ENCODE measurements at regions of chr7 and their contacts with region 1.

Region 1: GRCh38 chr7:43572516-43573049 is 10.3 kb upstream of the STK17A start:
- DNase-seq: no peak
- ATAC-seq: peak; percentile 65
- H3K4me3 ChIP-seq: no peak overlapping the region
- H3K27ac ChIP-seq: peak overlapping the region; percentile 18; the same call in 1 of the 2 replicates
- H3K4me1 ChIP-seq: peaks cover 33% of the 10 kb centered on the region
- H3K27me3 ChIP-seq: no peaks in the 10 kb centered on the region
- CTCF ChIP-seq: no peak
- EP300 ChIP-seq: no peak; a peak in 1 of 4 replicates
- POLR2A ChIP-seq: no peak
- RAD21 ChIP-seq: no peak

Region 2: GRCh38 chr7:42931834-42932651 is 640.5 kb before region 1 on chr7 and contains the starts of genes MRPL32 and PSMA2:
- CTCF ChIA-PET with region 1: no interaction called
- POLR2A ChIA-PET with region 1: no interaction called
- RAD21 ChIA-PET with region 1: no interaction called
- SMC1A ChIA-PET with region 1: interaction called, 3 read pairs
- in situ Hi-C with region 1: loop called (anchors 10 kb)
- intact Hi-C with region 1: no loop called
- DNase-seq: peak; percentile 95
- ATAC-seq: peak; percentile 97
- H3K4me3 ChIP-seq: peak within 1 kb of the TSS; percentile 94
- H3K27ac ChIP-seq: peak within 1 kb of the TSS; percentile 86
- H3K4me1 ChIP-seq: peaks cover 15% of the 10 kb centered on the region; the same call in 1 of the 2 replicates
- H3K27me3 ChIP-seq: no peaks in the 10 kb centered on the region
- CTCF ChIP-seq: no peak
- EP300 ChIP-seq: no peak
- POLR2A ChIP-seq: peak; percentile 96
- RAD21 ChIP-seq: no peak
- polyA plus RNA-seq, gene MRPL32: 274 to 339 TPM
- polyA plus RNA-seq, gene PSMA2: 1,068 to 1,223 TPM

Region 3: DNA sequence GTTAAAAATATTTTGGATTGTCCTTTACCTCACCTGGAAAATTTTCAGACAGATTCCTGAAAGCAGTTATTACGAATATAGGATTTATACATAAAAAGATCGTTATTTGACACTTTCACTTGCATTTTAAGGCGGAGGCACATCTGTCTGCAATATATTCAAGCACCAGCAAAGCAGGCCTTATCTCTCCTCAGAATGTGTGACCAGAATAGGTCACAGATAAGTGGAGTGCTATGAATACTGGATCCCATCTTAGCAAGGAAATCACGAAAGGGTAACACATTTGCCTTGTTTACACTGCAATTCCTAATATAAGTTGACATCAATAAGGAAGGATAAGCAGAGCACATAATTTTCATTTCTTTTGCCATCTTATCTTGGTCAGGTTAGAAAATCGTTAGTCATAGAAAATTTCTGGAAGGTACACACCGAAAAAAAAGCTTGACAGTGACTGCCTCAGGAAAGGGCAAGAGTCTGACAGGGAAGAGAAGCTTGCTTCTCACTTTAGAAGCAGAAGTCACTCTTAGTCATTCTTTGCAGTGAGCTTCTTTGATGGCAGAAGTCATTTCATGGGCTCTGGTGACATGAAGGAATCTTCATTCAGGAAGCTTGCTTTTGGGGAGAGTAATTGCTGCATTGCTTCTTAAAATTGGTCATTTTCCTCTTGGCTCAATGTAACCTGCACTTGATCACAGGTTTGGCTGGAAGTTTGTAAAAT is 87.7 kb before region 1 on chr7:
- CTCF ChIA-PET with region 1: interaction called, 3 read pairs
- POLR2A ChIA-PET with region 1: no interaction called
- RAD21 ChIA-PET with region 1: interaction called, 4 read pairs
- SMC1A ChIA-PET with region 1: interaction called, 3 read pairs
- in situ Hi-C with region 1: no loop called
- intact Hi-C with region 1: loop called (anchors 5 kb)
- DNase-seq: no peak
- ATAC-seq: no peak
- H3K4me3 ChIP-seq: no peak overlapping the region
- H3K27ac ChIP-seq: no peak overlapping the region
- H3K4me1 ChIP-seq: peaks cover 13% of the 10 kb centered on the region
- H3K27me3 ChIP-seq: no peaks in the 10 kb centered on the region
- CTCF ChIP-seq: no peak
- EP300 ChIP-seq: no peak
- POLR2A ChIP-seq: no peak
- RAD21 ChIP-seq: no peak

Region 4: DNA sequence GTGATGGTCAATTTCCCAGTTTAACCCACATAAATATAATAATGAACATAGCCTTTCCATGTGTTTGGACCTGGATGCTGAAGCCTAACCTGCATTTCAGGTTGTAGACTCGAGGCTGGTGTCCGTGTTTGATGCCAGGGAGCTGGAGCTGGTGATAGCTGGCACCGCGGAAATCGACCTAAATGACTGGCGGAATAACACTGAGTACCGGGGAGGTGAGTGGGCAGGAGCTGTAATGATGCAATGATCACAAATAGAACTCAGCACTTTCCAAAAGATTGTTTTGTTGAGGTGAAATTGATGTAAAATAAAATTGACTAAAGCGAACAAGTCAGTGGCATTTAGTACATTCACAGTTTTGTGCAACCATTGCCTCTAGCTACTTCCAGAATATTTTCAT is 20.5 kb before region 1 on chr7:
- CTCF ChIA-PET with region 1: no interaction called
- POLR2A ChIA-PET with region 1: no interaction called
- RAD21 ChIA-PET with region 1: no interaction called
- SMC1A ChIA-PET with region 1: no interaction called
- in situ Hi-C with region 1: no loop called
- intact Hi-C with region 1: no loop called
- DNase-seq: no peak
- ATAC-seq: no peak
- H3K4me3 ChIP-seq: no peak overlapping the region
- H3K27ac ChIP-seq: no peak overlapping the region
- H3K4me1 ChIP-seq: no peaks in the 10 kb centered on the region
- H3K27me3 ChIP-seq: no peaks in the 10 kb centered on the region
- CTCF ChIP-seq: no peak
- EP300 ChIP-seq: no peak
- POLR2A ChIP-seq: no peak
- RAD21 ChIP-seq: no peak

Region 5: GRCh38 chr7:43674584-43675436 is 102.2 kb after region 1 on chr7:
- CTCF ChIA-PET with region 1: no interaction called
- POLR2A ChIA-PET with region 1: no interaction called
- RAD21 ChIA-PET with region 1: no interaction called
- SMC1A ChIA-PET with region 1: no interaction called
- in situ Hi-C with region 1: no loop called
- intact Hi-C with region 1: no loop called
- DNase-seq: no peak
- ATAC-seq: no peak
- H3K4me3 ChIP-seq: no peak overlapping the region
- H3K27ac ChIP-seq: no peak overlapping the region
- H3K4me1 ChIP-seq: peaks cover 16% of the 10 kb centered on the region
- H3K27me3 ChIP-seq: no peaks in the 10 kb centered on the region
- CTCF ChIP-seq: no peak
- EP300 ChIP-seq: no peak
- POLR2A ChIP-seq: no peak
- RAD21 ChIP-seq: no peak

Region 6: DNA sequence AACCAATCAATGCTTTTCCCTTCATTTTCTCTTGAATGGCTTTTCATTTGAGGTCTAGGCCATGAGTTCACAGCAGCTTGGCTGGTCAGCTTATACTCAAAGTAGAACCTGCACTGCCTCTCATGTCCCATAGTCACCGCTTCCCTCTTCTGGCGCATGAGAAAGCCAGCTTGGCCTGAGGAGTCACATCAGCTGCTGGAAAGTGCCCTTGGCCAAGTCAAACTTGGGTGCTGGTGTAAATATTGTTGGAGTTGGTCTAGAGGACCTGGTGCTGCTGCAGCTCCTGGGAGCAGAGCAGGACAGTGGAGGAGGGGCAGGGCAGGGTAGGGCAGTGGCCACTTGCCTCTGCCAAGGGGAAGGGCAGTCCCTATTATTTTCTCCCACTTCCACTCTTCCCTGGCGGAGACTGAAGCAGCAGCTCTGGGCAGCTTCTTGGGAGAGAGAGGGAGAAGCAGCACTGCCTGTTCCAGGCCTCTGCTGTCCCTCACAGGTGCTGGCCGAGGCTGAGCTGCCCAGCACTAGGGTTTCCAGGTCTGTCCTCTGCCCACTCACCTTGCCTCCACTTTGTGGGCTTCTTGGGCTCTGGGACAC is 366.4 kb after region 1 on chr7:
- CTCF ChIA-PET with region 1: no interaction called
- POLR2A ChIA-PET with region 1: no interaction called
- RAD21 ChIA-PET with region 1: no interaction called
- SMC1A ChIA-PET with region 1: no interaction called
- in situ Hi-C with region 1: no loop called
- intact Hi-C with region 1: no loop called
- DNase-seq: no peak
- ATAC-seq: no peak
- H3K4me3 ChIP-seq: no peak overlapping the region
- H3K27ac ChIP-seq: no peak overlapping the region
- H3K4me1 ChIP-seq: no peaks in the 10 kb centered on the region
- H3K27me3 ChIP-seq: no peaks in the 10 kb centered on the region
- CTCF ChIP-seq: no peak
- EP300 ChIP-seq: no peak
- POLR2A ChIP-seq: no peak
- RAD21 ChIP-seq: no peak